ENCODE measurements at regions of chr9 and their contacts with region 1.

Region 1: GRCh38 chr9:97921959-97922724 is at the start of gene TRMO:
- DNase-seq: peak; percentile 98
- ATAC-seq: peak; percentile 83
- H3K4me3 Mint-ChIP-seq: peak within 1 kb of the TSS; percentile 82
- H3K27ac Mint-ChIP-seq: peak within 1 kb of the TSS; percentile 97
- H3K4me1 Mint-ChIP-seq: peaks cover 53% of the 10 kb centered on the region
- H3K27me3 Mint-ChIP-seq: peaks cover 3% of the 10 kb centered on the region
- total RNA-seq, gene TRMO: 14.9 to 15.4 TPM

Region 2: GRCh38 chr9:97900738-97901565 is 21.2 kb before region 1 on chr9:
- CTCF ChIA-PET with region 1: interaction called, 96 read pairs
- DNase-seq: no peak
- ATAC-seq: no peak
- H3K4me3 Mint-ChIP-seq: no peak overlapping the region
- H3K27ac Mint-ChIP-seq: peak overlapping the region; percentile 27
- H3K4me1 Mint-ChIP-seq: peaks cover 35% of the 10 kb centered on the region
- H3K27me3 Mint-ChIP-seq: no peaks in the 10 kb centered on the region

Region 3: DNA sequence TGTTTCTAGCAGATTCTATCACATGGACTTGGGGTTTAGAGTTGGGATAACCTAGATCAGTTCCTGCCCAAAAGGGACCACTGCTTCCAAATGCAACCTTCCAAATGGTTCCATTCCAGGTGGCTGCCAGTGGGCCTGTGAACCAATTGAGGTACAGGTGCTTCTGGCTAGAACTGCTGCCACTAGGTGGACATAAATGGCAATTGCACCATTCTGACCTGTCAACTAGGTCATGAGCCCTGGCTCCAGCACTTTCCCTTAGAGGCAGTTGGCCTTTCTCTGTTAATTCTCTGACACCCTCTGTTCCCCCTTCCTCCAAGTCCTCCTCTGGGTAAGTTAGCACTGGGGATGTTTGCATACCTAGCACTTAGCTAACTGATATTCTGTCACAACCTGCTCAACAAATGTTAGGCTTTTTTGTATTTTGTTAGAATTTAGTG is 32.4 kb after region 1 on chr9:
- CTCF ChIA-PET with region 1: interaction called, 41 read pairs
- DNase-seq: peak; percentile 72
- ATAC-seq: peak; percentile 96
- H3K4me3 Mint-ChIP-seq: no peak overlapping the region
- H3K27ac Mint-ChIP-seq: no peak overlapping the region
- H3K4me1 Mint-ChIP-seq: peaks cover 7% of the 10 kb centered on the region
- H3K27me3 Mint-ChIP-seq: peaks cover 8% of the 10 kb centered on the region

Region 4: DNA sequence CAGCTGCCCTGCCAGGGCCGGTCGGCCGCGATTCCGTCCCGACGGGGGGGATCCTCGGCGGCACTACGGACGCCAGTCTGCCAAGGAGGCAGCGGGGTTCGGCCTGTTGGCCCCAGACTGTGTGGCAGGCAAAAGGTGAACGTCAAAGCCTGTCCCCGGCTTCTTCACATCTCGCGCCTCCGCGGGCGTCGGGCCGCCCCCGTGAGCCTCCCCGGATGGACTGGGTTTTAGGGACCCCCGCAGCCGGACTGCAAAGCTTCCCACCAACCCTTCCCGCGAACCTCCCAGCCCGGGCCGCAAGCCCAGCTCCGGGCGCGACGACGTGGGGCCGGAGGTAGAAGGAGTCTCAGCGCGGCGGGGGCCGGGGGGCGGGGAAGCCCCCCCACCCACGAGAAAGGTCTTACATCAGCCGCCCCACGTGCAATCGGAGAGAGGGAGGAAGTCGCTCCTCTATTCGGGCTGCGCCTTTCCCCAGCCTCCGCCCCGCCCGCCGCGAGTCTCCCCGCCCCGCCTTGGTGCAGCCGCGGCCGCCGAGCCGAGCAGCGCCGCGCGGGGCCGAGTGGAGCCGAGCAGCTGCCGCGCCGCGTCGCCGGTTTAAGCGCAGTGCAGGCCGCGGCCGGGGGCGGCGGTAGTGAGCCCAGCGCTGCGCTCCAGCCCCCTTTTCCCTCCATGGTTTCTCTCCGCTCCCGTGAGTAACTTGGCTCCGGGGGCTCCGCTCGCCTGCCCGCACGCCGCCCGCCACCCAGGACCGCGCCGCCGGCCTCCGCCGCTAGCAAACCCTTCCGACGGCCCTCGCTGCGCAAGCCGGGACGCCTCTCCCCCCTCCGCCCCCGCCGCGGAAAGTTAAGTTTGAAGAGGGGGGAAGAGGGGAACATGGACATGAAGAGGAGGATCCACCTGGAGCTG is 60.8 kb after region 1 on chr9 and contains the start of gene ANP32B:
- CTCF ChIA-PET with region 1: interaction called, 99 read pairs
- DNase-seq: peak; percentile 96
- ATAC-seq: peak; percentile 85
- H3K4me3 Mint-ChIP-seq: peak within 1 kb of the TSS; percentile 79
- H3K27ac Mint-ChIP-seq: peak within 1 kb of the TSS; percentile 86
- H3K4me1 Mint-ChIP-seq: peaks cover 34% of the 10 kb centered on the region
- H3K27me3 Mint-ChIP-seq: no peaks in the 10 kb centered on the region
- total RNA-seq, gene ANP32B: 299 to 301 TPM

Region 5: GRCh38 chr9:98034593-98035546 is 112.7 kb after region 1 on chr9:
- CTCF ChIA-PET with region 1: interaction called, 28 read pairs
- DNase-seq: peak; percentile 94
- ATAC-seq: peak; percentile 97
- H3K4me3 Mint-ChIP-seq: peak overlapping the region; percentile 29
- H3K27ac Mint-ChIP-seq: no peak overlapping the region
- H3K4me1 Mint-ChIP-seq: peaks cover 14% of the 10 kb centered on the region
- H3K27me3 Mint-ChIP-seq: peaks cover 6% of the 10 kb centered on the region

Region 6: DNA sequence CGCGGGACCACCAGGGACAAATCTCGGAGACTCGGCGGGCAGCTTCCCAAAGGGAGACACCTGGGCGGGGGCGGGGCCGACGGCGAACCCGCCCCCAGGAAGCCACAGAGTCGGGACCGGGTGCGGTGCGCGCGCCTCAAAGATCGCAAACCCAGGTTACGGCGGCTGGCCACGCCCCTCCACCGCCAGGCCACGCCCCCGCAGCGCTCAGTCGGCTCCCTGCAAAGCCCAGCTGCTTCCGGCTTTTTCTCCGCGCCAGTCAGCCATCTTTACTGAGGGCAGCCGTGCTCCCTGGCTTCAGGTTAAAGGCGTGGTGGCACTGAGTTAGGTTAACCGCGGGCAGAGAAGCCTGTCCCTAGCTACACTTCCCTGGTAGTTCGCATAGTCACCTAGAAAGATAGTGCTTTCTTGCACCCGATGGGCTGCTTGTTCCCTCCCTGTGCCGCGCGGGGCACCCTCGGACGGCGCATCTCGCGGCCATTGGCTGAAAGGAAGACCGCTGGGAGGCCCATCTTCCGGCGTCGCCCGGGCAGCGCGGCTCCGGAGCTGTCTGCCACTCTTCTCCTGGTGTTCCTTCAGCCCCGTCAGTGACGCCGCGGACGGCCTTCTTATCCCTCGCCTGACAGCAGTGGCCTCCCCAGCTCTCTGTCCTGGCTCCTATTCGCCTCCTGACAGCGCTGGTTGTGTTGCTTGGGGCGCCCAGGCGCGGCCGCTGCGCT is 333.6 kb after region 1 on chr9 and contains the start of gene TBC1D2:
- CTCF ChIA-PET with region 1: interaction called, 29 read pairs
- DNase-seq: peak; percentile 98
- ATAC-seq: peak; percentile 88
- H3K4me3 Mint-ChIP-seq: peak within 1 kb of the TSS; percentile 82
- H3K27ac Mint-ChIP-seq: peak within 1 kb of the TSS; percentile 98
- H3K4me1 Mint-ChIP-seq: peaks cover 20% of the 10 kb centered on the region
- H3K27me3 Mint-ChIP-seq: peaks cover 7% of the 10 kb centered on the region
- total RNA-seq, gene TBC1D2: 2.7 to 5.0 TPM